Left ventricle myocardium inferior (tissue), 1 donor: ENCODE measurements at regions of chr20 and their contacts with region 1.

Region 1: DNA sequence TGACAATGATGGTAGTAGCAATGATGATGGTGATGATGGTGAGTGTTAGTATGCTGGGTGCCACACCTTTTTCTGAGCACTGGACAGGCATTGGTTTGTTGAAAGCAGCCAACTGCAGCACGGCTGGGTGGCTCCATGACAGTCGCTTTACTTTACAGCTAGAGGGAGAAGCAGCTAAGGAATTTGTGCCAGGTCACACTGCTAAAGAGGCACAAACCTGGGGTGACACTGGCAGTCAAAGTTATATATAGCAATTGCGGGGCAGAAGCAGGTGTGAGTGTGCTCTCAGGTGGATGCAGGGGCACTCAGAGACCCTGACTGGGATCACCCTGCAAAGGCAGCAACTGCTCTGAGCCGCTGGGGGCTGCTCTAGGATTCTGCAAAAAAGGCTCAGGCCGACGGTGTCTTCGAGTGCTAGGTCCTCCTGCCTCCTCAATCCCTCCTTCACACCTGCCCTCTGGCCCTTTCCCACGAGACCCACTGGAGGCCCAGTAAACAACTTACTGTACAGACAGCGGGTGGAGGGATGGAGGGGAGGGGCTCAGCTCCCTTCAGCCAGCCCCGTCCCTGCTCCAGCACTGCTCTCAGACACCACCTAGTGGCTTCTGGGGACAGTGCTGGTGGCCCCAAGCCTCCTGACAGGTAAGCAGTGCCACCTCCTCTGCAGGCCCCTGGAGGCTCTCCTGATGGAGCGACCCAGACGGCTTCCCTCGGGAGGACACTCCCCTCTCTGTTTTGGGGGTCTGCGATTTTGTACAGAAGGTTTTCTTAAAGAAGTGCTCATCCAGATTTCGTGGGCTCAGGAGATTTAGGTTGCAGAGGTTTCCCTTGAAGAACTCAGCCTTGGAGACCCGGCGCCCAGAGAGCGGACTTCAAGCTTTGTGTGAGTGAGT is 4.4 kb upstream of the RPS21 start:
- DNase-seq: peak; percentile 72
- H3K4me3 ChIP-seq: no peak overlapping the region
- H3K27ac ChIP-seq: peak overlapping the region; percentile 61
- H3K4me1 ChIP-seq: peaks cover 64% of the 10 kb centered on the region
- H3K27me3 ChIP-seq: no peaks in the 10 kb centered on the region
- CTCF ChIP-seq: peak; percentile 97

Region 2: GRCh38 chr20:62302341-62303058 is 80.1 kb before region 1 on chr20 and contains the start of gene ADRM1:
- intact Hi-C with region 1: loop called (anchors 5 kb)
- DNase-seq: peak; percentile 96
- H3K4me3 ChIP-seq: peak within 1 kb of the TSS; percentile 94
- H3K27ac ChIP-seq: peak within 1 kb of the TSS; percentile 99
- H3K4me1 ChIP-seq: peaks cover 49% of the 10 kb centered on the region
- H3K27me3 ChIP-seq: no peaks in the 10 kb centered on the region
- CTCF ChIP-seq: peak; percentile 96
- total RNA-seq, gene ADRM1: 70.5 TPM